ENCODE measurements at regions of chr16 and their contacts with region 1.

Region 1: DNA sequence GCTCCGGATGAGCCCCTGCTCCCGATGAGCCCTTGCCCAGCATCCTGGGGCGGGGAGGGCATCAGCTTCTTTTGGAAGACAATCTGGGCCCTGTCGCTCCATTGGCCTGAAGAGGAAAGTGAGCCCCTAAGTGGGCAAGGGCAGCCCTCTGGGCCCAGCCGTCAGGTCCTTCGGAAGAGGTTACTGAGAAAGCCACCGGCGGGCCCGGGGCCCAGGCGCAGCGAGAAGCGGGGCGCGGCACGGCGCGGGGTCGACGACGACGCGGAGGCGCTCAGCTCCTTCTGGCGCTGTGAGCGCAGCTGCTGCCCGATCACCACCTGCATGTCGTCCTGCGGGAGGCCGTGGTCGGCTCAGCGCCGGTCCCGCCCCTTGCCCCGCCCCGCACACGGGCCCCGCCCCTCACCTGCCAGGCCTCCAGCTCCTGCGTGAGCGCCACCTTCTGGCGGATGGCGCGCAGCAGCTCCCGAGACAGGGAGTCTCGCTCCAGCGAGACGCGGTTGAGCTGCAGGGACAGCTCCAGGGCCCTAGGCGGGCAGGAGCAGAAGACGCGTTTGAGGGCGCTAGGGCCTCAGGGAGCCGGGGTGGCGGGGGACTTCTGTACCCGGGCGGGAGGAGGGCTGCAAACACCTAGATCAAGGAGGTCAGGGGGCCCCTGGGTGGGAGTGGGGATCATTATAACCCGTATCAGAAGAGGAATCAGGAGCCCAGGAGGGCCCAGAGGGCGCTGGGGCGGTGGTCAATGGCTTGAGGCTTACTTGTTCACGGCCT is 4.3 kb downstream of the THOC6 start:
- DNase-seq: peak; percentile 80
- ATAC-seq: peak; percentile 26 to 27

Region 2: DNA sequence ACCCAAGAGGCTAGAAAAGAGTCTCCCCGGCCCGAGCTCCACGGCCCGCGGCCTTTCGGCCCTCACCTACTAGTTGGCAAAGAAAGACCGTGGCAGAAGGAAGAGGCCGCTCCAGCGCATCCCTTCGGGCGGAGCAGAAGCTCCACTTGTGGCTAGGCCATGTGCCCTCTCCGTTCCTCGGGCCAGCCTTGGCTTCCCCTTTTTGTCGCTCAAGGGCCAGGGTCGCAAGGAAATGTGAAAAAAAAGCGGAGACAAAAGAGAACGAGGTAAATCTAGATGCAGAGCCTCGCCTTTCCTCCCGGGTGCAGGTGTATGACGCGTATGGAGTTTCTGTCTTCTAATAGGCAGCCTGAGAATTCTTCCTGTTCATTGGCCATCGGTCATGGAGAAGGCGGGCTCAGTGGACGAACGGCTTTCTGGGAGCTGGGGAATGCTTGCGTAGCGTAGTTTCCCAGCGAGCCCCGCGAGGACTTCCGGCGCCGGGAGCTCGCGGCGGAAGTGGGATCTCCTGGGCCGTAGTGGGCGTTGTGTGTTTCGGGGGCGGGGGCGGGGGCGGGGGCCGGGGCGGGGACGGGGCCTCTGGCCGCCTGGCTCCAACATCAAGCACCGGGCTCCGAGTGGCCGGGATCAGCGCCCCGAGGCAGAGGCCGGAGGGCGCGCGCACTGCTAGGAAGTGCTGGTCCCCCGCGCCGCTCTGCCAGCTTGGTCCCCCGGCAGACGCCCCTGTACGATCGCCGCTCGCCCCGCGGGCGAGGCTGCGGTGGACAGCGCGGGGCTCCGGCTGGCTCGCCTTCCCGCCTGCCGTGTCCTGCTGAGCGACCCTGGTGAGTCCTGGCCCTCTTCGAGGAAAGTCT is 106.7 kb after region 1 on chr16 and contains the start of gene ZNF213:
- intact Hi-C with region 1: loop called in 1 of 2 experiments (anchors 5 kb)
- DNase-seq: peak; percentile 96
- ATAC-seq: peak; percentile 97
- total RNA-seq, gene ZNF213: 6.5 to 6.7 TPM

Measured in left cardiac atrium (tissue), 4 donors.